Mammary epithelial cell (primary cell): ENCODE measurements at regions of chr6 and their contacts with region 1.

Region 1: DNA sequence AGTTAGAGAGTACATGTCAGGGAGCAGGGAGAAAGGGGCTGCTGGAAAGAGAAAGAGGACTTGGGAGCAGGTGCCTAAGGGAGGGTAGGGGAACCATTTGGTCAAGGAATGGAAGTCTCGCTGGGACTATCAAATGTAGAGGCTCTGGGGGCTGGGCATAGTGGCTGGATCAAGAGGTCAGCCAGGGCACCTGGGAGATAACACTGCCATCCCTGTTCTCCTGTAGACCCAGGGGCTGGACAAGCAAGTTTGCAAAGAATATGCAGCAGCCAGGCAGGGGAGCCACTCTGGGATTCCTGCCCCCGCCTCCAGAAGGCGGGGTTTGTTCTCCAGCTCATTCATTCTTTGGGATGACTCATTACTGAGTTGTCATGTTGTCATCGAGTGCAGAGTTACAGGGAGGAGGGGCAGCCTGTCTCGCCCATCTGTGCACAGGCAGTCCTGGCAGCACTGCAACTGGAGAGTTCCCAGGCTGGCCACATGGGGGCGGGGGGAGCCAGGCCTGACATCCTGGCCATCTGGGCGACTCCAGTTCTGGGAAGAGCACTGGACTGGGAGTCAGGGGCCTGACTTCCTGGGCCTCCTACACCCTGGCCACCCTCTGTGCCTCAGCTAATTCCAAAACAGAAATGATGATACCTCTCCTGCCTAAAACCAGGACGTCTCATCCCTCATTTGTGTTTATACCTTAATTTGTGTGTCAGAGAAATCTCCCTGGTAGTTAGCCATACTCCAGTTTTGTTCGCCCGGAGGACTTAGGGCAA is 28.2 kb upstream of the ZFAND3 start:
- DNase-seq: peak; percentile 95
- H3K4me3 ChIP-seq: no peak overlapping the region
- H3K27ac ChIP-seq: no peak overlapping the region
- H3K4me1 ChIP-seq: peaks cover 23% of the 10 kb centered on the region
- H3K27me3 ChIP-seq: no peaks in the 10 kb centered on the region
- CTCF ChIP-seq: peak; percentile 92 to 98

Region 2: GRCh38 chr6:37653933-37654565 is 137.3 kb before region 1 on chr6:
- CTCF ChIA-PET with region 1: no interaction called
- dilution Hi-C with region 1: no loop called
- in situ Hi-C with region 1: no loop called
- intact Hi-C with region 1: no loop called
- DNase-seq: peak; percentile 50
- H3K4me3 ChIP-seq: no peak overlapping the region
- H3K27ac ChIP-seq: no peak overlapping the region
- H3K4me1 ChIP-seq: peaks cover 15% of the 10 kb centered on the region
- H3K27me3 ChIP-seq: no peaks in the 10 kb centered on the region
- CTCF ChIP-seq: peak; percentile 62 to 86

Region 3: GRCh38 chr6:37752718-37753117 is 38.6 kb before region 1 on chr6:
- CTCF ChIA-PET with region 1: no interaction called
- dilution Hi-C with region 1: loop called (anchors 5 kb)
- in situ Hi-C with region 1: no loop called
- intact Hi-C with region 1: no loop called
- DNase-seq: no peak
- H3K4me3 ChIP-seq: no peak overlapping the region
- H3K27ac ChIP-seq: no peak overlapping the region
- H3K4me1 ChIP-seq: peaks cover 3% of the 10 kb centered on the region
- H3K27me3 ChIP-seq: no peaks in the 10 kb centered on the region
- CTCF ChIP-seq: no peak

Region 4: GRCh38 chr6:37819177-37819823 is 28.0 kb after region 1 on chr6 and contains the start of gene ZFAND3:
- CTCF ChIA-PET with region 1: interaction called, 8 read pairs
- dilution Hi-C with region 1: no loop called
- in situ Hi-C with region 1: no loop called
- intact Hi-C with region 1: loop called (anchors 1 kb)
- DNase-seq: peak; percentile 97
- H3K4me3 ChIP-seq: peak within 1 kb of the TSS; percentile 78 to 91 (median 87)
- H3K27ac ChIP-seq: peak within 1 kb of the TSS; percentile 97
- H3K4me1 ChIP-seq: peaks cover 38% of the 10 kb centered on the region
- H3K27me3 ChIP-seq: no peaks in the 10 kb centered on the region
- CTCF ChIP-seq: no peak
- total RNA-seq, gene ZFAND3: 34.8 to 79.5 TPM

Region 5: DNA sequence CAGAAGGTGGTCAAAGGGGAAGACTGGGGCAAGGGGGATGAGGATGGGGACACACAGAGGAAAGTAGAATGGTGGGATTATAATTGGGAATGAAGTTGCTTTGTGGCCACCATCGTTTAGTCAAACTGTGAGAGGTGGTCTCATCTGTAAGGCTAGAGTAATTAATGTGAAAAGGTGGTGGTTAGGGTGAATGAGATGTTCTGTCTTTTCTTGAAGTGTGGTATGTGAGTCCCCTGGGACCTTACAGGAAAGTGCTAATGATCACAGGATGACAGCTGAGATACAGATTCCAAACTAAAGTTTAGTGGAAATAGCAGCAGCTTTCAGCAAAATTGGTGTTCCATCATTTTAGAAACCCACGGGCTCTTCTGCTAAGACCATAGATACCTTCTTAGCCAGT is 38.9 kb after region 1 on chr6:
- CTCF ChIA-PET with region 1: no interaction called
- dilution Hi-C with region 1: no loop called
- in situ Hi-C with region 1: no loop called
- intact Hi-C with region 1: no loop called
- DNase-seq: no peak
- H3K4me3 ChIP-seq: no peak overlapping the region
- H3K27ac ChIP-seq: no peak overlapping the region
- H3K4me1 ChIP-seq: no peaks in the 10 kb centered on the region
- H3K27me3 ChIP-seq: no peaks in the 10 kb centered on the region
- CTCF ChIP-seq: no peak

Region 6: GRCh38 chr6:37860226-37860839 is 69.0 kb after region 1 on chr6:
- CTCF ChIA-PET with region 1: interaction called, 13 read pairs
- dilution Hi-C with region 1: no loop called
- in situ Hi-C with region 1: no loop called
- intact Hi-C with region 1: loop called (anchors 1 kb)
- DNase-seq: no peak
- H3K4me3 ChIP-seq: no peak overlapping the region
- H3K27ac ChIP-seq: no peak overlapping the region
- H3K4me1 ChIP-seq: peaks cover 16% of the 10 kb centered on the region
- H3K27me3 ChIP-seq: no peaks in the 10 kb centered on the region
- CTCF ChIP-seq: peak; percentile 56 to 70

Region 7: DNA sequence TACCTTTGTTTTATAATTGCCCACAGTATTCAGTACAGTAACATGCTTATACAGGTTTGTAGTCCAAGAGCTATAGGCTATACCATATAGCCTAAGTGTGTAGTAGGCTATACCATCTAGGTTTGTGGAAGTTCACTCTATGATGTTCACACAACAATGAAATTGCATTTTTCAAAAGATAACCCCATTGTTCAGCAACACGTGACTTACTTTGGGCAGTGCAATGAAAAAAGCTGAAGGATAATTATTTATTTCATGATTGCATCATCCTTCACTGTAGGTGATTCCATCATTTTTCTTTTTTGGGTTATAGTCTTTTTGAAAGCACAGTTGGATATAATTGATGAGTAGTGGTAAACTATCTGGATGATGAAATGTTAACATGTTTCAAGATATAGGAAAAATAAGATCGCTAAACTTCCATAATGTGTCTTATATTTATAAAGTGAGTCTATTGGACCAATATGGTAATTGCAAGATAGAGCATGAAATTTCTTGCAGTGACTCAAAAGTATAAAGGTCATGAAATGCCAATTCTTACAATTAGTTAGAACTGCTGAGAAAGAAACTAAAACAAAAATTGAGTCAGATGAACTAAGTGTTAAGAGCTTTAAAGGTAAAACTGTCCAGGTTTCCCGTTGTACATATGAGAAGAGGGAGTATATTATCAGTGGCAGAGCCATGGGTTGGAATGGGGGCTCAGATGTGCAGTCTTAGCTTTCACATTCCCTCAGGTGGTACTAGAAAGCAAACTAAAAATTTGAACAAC is 192.6 kb after region 1 on chr6:
- CTCF ChIA-PET with region 1: interaction called, 12 read pairs
- dilution Hi-C with region 1: no loop called
- in situ Hi-C with region 1: no loop called
- intact Hi-C with region 1: no loop called
- DNase-seq: no peak
- H3K4me3 ChIP-seq: no peak overlapping the region
- H3K27ac ChIP-seq: no peak overlapping the region
- H3K4me1 ChIP-seq: peaks cover 18% of the 10 kb centered on the region
- H3K27me3 ChIP-seq: no peaks in the 10 kb centered on the region
- CTCF ChIP-seq: no peak

Region 8: GRCh38 chr6:38012573-38012972 is 221.2 kb after region 1 on chr6:
- CTCF ChIA-PET with region 1: no interaction called
- dilution Hi-C with region 1: no loop called
- in situ Hi-C with region 1: loop called in 1 of 2 experiments (anchors 10 kb)
- intact Hi-C with region 1: loop called (anchors 2 kb)
- DNase-seq: peak; percentile 30
- H3K4me3 ChIP-seq: no peak overlapping the region
- H3K27ac ChIP-seq: no peak overlapping the region
- H3K4me1 ChIP-seq: no peaks in the 10 kb centered on the region
- H3K27me3 ChIP-seq: no peaks in the 10 kb centered on the region
- CTCF ChIP-seq: peak; percentile 78 to 83

Region 9: DNA sequence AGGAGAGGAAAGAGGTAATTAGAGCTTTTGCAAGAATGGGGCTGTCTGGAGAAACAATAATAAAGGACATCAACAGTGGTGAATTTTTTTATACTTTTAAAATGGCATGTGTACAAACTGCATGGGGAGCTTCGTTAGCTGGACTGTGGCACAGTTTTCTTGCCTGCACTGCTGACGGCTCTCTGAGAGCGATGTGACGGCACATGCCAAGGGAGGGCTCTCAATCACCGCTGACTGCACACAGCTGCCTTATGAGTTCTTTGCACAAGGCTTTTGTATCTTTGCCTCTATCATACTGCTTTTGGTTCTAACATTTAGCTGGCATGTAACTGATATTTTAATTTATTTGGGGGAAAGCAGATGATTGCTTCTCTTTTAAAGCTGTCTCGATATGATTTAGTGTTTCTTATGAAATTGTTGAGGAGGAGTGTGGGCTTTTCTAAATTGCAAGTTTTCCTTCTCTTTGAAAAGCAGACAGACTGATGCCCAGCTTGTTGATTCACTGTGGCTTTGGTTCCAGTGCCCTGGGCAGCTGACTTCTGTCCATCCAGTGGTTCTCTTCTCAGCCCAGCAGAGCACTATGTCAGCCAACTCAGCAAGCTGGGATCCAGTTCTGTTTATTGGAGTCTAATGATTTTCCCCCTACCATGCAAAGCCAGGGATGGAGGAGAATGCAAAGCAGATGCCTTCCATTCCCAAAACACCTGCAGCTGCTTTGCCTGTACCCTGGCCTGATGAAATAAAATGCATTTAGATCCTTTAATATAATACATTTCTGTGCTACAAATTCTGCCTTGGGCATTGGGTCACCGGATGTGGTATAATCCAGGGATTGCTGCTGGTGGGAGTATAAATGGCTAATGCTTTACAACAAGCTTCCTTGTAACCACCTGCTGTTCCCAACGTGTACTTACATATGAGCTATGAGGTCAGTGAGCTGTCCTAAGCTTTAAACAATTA is 352.1 kb after region 1 on chr6:
- CTCF ChIA-PET with region 1: no interaction called
- dilution Hi-C with region 1: no loop called
- in situ Hi-C with region 1: no loop called
- intact Hi-C with region 1: no loop called
- DNase-seq: peak; percentile 39
- H3K4me3 ChIP-seq: no peak overlapping the region
- H3K27ac ChIP-seq: no peak overlapping the region
- H3K4me1 ChIP-seq: peaks cover 7% of the 10 kb centered on the region
- H3K27me3 ChIP-seq: no peaks in the 10 kb centered on the region
- CTCF ChIP-seq: no peak

Region 10: DNA sequence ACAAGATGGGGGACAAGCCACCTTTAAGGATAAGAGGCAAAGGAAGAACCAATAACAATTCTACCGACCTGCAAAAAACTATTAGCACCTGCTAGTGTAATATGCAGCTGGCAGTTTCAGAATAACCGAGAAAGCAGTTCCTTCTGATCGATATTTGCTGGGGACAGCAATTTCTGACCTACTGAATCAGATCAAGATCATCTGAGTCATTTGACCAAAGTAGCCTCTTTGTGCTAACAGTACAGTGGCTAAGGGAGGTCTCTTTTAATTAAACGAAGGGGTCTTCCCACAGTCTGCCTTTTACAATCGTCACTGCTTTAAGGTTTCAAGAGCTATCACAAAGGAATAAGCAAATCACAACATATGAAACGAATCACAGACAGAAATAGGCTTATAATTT is 529.5 kb after region 1 on chr6:
- CTCF ChIA-PET with region 1: no interaction called
- dilution Hi-C with region 1: no loop called
- in situ Hi-C with region 1: no loop called
- intact Hi-C with region 1: no loop called
- DNase-seq: no peak
- H3K4me3 ChIP-seq: no peak overlapping the region
- H3K27ac ChIP-seq: no peak overlapping the region
- H3K4me1 ChIP-seq: peaks cover 7% of the 10 kb centered on the region
- H3K27me3 ChIP-seq: no peaks in the 10 kb centered on the region
- CTCF ChIP-seq: no peak